K562 (cell line): ENCODE measurements at regions of chr2 and their contacts with region 1.

Region 1: DNA sequence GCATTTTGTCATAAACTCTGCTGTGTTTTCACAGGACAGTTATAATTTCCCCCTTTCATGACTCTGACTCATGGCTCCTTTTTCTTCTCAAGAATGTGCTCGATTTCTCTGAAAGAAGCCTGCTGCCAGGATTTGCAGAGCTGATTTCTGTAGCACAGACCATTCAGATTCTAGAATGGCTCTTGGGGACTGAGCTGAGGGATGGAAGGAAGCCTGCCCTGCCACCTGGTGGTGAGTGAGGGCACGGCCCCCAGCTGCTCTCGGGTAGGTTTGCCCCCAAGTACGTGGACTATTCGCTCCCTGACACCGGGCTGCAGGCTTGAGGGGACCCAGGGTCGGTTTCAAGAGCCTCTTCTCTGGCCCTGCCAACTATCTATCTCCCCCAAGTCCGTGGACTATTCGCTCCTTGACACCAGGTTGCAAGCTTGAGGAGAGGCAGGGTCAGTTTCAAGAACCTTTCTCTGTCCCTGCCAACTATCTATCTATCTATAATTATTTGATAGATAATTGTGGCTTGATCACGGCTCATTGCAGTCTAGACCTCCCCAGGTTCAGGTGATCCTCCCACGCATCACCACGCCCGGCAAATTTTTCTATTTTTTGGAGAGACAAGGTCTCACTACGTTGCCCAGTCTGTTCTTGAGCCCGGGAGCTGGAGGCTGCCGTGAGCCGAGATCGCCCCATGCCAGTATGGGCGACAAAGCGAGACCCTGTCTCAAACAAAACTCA is 1.4 kb upstream of the SMYD5 start:
- DNase-seq: peak; percentile 76 to 84 (median 80)
- ATAC-seq: peak; percentile 84
- H3K4me3 ChIP-seq: no peak overlapping the region
- H3K27ac ChIP-seq: no peak overlapping the region
- H3K4me1 ChIP-seq: peaks cover 15 to 23% of the 10 kb centered on the region in 2 experiments; a peak in 4 of 5 replicates
- H3K27me3 ChIP-seq: no peaks in the 10 kb centered on the region
- CTCF ChIP-seq: peak; percentile 86 to 96 (median 87)
- EP300 ChIP-seq: no peak
- POLR2A ChIP-seq: no peak
- RAD21 ChIP-seq: peak; percentile 59 to 70

Region 2: GRCh38 chr2:73225513-73226360 is 13.1 kb after region 1 on chr2:
- CTCF ChIA-PET with region 1: no interaction called
- POLR2A ChIA-PET with region 1: interaction called, 25 read pairs
- in situ Hi-C with region 1: no loop called
- intact Hi-C with region 1: no loop called
- DNase-seq: no peak
- ATAC-seq: peak; percentile 24; the same call in 2 of the 3 replicates
- H3K4me3 ChIP-seq: no peak overlapping the region
- H3K27ac ChIP-seq: no peak overlapping the region
- H3K4me1 ChIP-seq: peaks cover 0 to 7% of the 10 kb centered on the region in 2 experiments; a peak in 3 of 5 replicates
- H3K27me3 ChIP-seq: no peaks in the 10 kb centered on the region
- CTCF ChIP-seq: no peak
- EP300 ChIP-seq: no peak
- POLR2A ChIP-seq: no peak
- RAD21 ChIP-seq: no peak